ENCODE measurements at regions of chr3 and their contacts with region 1.

Region 1: GRCh38 chr3:46705022-46705530 is 3.9 kb downstream of the TMIE start:
- DNase-seq: peak; percentile 54
- ATAC-seq: peak; percentile 87
- H3K4me3 Mint-ChIP-seq: no peak overlapping the region
- H3K27ac Mint-ChIP-seq: no peak overlapping the region
- H3K4me1 Mint-ChIP-seq: no peaks in the 10 kb centered on the region
- H3K27me3 Mint-ChIP-seq: peaks cover 15% of the 10 kb centered on the region
- CTCF ChIP-seq: peak; percentile 78

Region 2: GRCh38 chr3:46690798-46691197 is 14.3 kb before region 1 on chr3:
- CTCF ChIA-PET with region 1: no interaction called
- POLR2A ChIA-PET with region 1: no interaction called
- intact Hi-C with region 1: no loop called
- DNase-seq: no peak
- ATAC-seq: no peak
- H3K4me3 Mint-ChIP-seq: no peak overlapping the region
- H3K27ac Mint-ChIP-seq: no peak overlapping the region
- H3K4me1 Mint-ChIP-seq: peaks cover 29% of the 10 kb centered on the region
- H3K27me3 Mint-ChIP-seq: peaks cover 20% of the 10 kb centered on the region
- CTCF ChIP-seq: no peak

Region 3: GRCh38 chr3:46895204-46895660 is 190.2 kb after region 1 on chr3:
- CTCF ChIA-PET with region 1: interaction called, 15 read pairs
- POLR2A ChIA-PET with region 1: no interaction called
- intact Hi-C with region 1: loop called (anchors 1 kb)
- DNase-seq: peak; percentile 76
- ATAC-seq: peak; percentile 77
- H3K4me3 Mint-ChIP-seq: no peak overlapping the region
- H3K27ac Mint-ChIP-seq: no peak overlapping the region
- H3K4me1 Mint-ChIP-seq: peaks cover 24% of the 10 kb centered on the region
- H3K27me3 Mint-ChIP-seq: peaks cover 37% of the 10 kb centered on the region
- CTCF ChIP-seq: no peak

Region 4: DNA sequence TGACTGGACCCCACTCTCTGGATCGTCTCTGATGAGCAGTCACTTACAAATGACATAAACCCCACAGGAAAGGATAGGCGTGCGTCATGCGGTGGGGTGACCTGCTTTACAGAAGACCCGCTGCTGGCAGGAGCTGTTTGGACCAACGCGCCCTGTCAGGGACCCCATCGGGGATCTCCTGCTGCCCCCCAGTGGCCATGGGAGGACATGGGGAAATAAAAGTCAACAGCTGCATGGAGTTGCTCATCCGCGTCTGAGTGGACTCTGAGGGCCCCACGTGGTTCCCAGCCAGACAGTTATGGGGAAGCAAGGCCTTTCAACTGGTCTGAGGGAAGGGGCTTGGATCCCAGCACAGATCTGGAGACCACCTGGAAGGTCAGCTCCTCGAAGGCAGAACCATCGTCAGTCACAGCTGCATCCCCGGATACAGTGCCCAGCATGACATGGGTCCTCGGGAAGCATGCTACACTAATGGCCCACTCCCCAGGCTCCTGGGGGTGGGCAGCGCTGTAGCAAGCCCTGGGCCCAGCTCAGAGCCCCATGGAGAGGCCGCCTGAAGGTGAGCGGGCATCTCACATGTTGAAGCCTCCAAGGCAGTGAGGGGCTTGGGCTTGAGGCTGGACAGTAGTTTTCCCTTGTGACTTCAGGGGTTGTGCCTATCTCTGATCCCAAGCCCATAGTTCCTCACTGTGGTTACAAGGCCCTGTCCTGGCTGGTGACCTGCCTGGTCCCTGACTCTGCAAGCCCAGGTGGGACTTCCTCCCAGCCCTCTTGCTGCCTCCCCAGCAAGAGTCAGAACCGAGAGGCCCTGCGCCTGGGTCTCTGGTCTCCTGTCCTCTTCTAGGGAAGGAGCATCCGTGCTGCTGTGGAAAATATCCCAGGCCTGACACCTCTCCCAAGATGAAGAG is 204.7 kb after region 1 on chr3:
- CTCF ChIA-PET with region 1: interaction called, 7 read pairs
- POLR2A ChIA-PET with region 1: no interaction called
- intact Hi-C with region 1: loop called (anchors 1 kb)
- DNase-seq: peak; percentile 68
- ATAC-seq: peak; percentile 91
- H3K4me3 Mint-ChIP-seq: no peak overlapping the region
- H3K27ac Mint-ChIP-seq: no peak overlapping the region
- H3K4me1 Mint-ChIP-seq: peaks cover 7% of the 10 kb centered on the region
- H3K27me3 Mint-ChIP-seq: no peaks in the 10 kb centered on the region
- CTCF ChIP-seq: peak; percentile 44

Measured in activated B cell treated with CpG ODN at 0.5 μM for 24 hours (primary cell).